RWPE1 (cell line): ENCODE measurements at regions of chr12 and their contacts with region 1.

Region 1: DNA sequence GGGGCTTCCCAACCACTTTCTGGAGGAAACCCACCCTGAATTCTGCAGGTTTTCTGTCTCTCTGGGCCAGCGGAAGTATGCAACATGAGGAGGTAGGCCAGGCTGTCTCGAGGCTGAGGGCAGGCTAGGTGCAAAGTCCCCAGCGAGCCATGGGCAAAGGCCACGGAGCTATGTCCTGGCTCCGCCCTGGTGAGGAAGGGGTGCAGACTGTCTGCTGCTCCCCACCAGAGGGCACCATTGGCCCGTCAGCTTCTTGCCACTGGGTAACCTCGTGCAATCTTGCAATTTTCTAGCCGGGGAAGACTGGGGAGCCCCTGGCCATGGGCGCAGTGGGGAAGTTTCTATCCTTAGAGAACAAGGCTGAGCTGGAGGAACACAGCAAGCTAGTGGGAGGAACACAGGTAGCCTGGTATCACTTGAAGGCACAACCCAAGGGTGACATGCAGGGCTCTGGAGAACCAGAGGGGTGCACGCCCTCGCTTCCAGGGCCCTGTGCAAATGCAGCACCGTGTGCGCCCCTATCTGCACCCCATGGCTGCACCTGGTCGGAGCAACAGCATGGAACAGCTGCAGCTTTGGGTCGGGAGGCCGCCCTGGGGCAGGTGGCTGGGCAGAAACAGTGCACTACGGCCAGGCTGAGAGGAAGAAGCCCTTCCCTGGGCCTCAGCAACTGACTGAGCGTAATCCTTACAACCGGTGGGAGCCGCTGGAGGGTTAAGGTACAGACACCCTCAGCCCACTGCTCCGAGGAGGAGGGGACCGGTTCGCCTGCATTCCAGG is 27.6 kb upstream of the RPLP0 start:
- DNase-seq: peak; percentile 75
- H3K27ac ChIP-seq: peak overlapping the region; percentile 100
- CTCF ChIP-seq: peak; percentile 95

Region 2: DNA sequence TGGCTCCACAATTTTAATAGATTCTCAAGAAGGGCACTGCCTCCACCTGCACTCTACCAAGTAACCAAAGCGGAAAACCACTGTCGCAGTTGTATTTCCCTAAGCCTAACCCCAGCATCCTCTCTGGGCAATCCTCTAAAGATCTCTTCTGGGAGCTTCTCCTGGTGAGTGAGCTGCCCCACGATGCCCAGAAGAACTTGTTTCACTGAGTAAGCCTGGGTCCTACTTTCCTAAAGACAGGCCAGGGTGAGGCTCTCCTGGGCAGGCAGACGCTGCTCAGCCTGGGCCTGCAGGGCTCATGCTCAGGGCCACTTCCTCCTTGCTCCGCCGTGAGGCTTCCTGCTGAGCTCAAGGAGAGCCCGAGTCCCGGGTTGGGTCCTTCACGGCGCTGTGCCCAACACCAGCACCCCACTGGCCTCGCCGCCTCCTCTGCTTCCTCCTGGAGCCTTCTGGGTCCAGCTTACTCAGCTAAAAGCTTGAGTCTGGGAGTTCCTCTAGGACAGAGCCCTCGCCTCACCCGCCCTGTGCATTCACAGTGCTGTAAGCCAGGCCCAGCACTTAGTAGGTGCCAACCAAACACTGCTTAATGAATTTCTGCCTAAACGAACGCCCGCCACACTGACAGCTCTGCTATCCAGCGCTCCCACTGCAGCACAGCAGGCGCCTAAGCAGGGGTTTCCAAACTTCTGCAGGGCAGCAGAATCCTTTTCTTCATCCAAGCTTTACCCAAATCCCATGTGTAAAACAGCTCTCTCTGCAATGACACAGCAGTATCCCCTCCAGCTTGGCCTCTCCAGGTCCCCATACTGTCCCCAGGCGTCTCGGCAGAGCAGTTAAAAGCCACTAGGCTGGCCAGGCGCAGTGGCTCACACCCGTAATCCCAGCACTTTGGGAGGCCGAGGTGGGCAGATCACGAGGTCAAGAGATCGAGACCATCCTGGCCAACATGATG is 117.7 kb before region 1 on chr12:
- CTCF ChIA-PET with region 1: no interaction called
- POLR2A ChIA-PET with region 1: no interaction called
- DNase-seq: no peak
- H3K27ac ChIP-seq: peak overlapping the region; percentile 51
- CTCF ChIP-seq: no peak

Region 3: DNA sequence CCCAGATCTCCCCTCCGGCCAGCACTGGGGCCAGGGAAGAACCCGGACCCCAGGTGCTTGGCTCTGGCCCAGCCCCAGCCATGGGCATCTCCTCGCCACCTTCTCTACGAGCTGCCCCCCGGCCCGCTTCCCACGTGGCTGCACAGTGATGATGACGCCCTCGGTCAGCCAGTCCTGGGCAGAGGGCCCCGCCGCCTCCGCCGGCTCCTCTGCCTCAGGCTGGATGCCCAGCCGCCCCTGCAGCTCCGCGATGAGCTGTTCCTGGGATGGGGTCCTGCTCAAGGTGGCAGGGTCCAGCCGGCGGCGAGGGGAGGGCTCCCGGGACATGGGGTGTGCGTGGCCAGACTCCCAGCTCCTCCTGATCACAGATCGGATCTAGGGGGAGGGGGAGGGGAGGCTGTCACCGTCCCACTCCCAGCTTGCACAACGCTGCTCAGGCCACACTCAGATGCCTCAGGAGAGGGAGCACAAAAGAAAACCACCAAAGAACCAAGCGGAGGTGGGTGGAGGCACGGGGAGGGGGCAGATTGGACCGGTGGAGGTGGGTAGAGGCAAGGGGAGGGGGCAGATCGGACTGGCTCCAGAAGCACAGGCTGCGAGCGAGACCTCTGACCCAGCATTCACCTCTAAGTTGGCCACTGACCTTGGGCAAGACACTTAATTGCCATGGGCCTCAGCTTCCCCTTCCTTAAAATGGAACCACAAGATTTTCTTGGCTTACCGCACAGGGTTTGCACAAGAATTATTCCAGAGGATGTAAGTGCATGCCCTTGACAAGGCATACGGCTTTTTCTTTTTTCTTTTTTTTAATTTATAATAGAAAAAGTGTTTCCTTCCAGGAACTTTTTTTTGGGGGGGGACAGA is 11.5 kb before region 1 on chr12:
- CTCF ChIA-PET with region 1: interaction called, 14 read pairs
- POLR2A ChIA-PET with region 1: no interaction called
- DNase-seq: no peak
- H3K27ac ChIP-seq: peak overlapping the region; percentile 82
- CTCF ChIP-seq: no peak

Region 4: GRCh38 chr12:120257041-120257821 is 28.8 kb after region 1 on chr12:
- CTCF ChIA-PET with region 1: interaction called, 142 read pairs
- POLR2A ChIA-PET with region 1: interaction called, 64 read pairs
- DNase-seq: peak; percentile 75
- H3K27ac ChIP-seq: peak overlapping the region; percentile 96
- CTCF ChIP-seq: no peak

Region 5: DNA sequence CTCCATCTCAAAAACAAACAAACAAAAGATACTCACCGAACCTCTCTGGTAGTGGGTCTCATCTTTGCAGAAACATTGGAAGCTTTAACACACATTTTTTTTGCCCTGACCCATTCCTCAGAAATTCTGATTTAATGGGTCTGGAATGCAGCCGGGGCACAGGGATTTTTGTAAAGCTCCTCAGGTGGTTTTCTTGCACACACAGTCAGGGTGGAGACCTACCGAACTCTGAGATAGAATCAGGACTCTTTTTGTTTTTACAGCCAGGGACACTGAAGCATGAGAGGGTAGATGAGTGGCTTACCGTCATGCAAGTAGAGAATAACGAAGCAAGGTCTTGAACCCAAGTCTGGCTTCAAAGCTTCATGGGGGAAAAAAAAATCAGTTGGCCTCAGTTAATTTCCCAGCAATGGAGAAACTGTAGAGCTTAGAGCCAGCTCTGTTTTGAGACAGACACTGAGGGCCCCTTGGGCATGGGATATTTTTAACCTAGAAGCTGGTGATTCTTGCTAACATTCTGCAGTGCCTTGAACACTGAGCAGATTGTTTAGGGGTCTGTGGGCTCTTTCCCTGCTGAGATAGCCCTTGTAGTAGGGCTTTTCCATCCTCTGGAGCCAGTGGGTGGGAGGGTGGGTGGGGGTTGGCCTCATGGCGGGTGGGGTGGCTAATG is 58.5 kb after region 1 on chr12:
- CTCF ChIA-PET with region 1: interaction called, 10 read pairs
- POLR2A ChIA-PET with region 1: interaction called, 14 read pairs
- DNase-seq: no peak
- H3K27ac ChIP-seq: no peak overlapping the region
- CTCF ChIP-seq: no peak